Vagina (tissue), 2 donors: ENCODE measurements at regions of chr14 and their contacts with region 1.

Region 1: DNA sequence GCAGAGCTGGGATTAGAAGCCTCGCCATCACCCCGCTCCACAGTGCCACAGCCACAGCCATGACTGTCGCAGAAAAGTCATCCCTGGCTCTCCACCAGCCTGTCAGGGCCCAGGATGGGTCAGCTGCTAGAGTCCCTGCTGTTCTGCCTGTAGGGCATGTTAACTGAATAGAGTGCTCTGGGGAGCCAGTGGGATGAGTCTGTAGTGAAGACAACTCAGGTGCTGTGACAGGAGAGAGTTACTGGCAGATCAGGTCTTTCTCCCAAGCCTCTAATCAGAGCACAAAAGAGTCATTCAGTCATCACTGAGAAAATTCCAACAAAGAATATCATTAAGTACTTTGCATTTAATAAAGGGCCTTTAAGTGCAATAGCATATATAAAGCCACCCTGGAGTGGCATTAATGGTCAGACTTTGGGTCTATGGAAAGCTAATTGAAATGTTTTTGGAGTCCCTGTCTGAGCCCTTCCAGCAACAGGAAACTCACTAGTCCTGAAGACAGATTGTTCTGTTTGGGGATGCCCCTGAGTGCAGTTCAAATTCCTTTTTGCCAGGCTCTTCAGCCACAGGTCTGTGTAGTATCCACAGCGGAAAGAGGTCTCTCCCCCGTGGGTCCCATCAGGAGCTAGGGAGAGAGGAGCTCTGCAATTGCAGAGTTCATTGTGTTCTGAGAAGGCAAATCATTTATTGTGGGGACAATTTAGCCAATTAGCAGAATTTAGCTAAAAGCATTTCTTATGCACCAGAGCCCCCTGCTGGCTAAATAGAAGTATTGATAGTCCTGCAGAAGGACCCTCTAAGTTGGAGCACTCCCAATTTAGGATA is 45.2 kb upstream of the C14orf132 start:
- DNase-seq: no peak
- H3K4me3 ChIP-seq: no peak overlapping the region
- H3K27ac ChIP-seq: no peak overlapping the region
- H3K4me1 ChIP-seq: no peaks in the 10 kb centered on the region
- H3K27me3 ChIP-seq: no peaks in the 10 kb centered on the region
- CTCF ChIP-seq: peak; percentile 34 to 76 (median 51)
- POLR2A ChIP-seq: no peak

Region 2: DNA sequence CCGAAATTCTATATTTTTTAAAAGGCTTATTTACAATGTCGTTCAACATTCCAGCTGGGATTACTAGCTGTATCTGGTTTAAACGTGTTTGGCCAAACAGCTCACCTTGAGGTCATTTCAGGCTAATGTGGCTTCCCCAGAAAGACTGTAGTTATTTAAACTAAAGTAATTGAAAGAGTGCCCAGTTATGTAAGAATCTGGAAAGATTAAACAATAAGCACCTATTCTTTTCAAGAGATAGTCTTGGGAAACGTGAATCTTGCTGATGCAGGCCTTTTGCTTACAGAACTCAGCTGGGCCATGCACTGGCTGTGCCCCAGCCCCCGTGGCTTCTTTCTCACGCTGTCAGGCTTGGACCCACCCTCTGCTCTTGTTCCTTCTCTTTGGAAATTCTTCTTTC is 434.8 kb before region 1 on chr14:
- intact Hi-C with region 1: loop called (anchors 5 kb)
- DNase-seq: no peak
- H3K4me3 ChIP-seq: no peak overlapping the region
- H3K27ac ChIP-seq: no peak overlapping the region
- H3K4me1 ChIP-seq: peaks cover 3% of the 10 kb centered on the region
- H3K27me3 ChIP-seq: no peaks in the 10 kb centered on the region
- CTCF ChIP-seq: no peak
- POLR2A ChIP-seq: no peak

Region 3: DNA sequence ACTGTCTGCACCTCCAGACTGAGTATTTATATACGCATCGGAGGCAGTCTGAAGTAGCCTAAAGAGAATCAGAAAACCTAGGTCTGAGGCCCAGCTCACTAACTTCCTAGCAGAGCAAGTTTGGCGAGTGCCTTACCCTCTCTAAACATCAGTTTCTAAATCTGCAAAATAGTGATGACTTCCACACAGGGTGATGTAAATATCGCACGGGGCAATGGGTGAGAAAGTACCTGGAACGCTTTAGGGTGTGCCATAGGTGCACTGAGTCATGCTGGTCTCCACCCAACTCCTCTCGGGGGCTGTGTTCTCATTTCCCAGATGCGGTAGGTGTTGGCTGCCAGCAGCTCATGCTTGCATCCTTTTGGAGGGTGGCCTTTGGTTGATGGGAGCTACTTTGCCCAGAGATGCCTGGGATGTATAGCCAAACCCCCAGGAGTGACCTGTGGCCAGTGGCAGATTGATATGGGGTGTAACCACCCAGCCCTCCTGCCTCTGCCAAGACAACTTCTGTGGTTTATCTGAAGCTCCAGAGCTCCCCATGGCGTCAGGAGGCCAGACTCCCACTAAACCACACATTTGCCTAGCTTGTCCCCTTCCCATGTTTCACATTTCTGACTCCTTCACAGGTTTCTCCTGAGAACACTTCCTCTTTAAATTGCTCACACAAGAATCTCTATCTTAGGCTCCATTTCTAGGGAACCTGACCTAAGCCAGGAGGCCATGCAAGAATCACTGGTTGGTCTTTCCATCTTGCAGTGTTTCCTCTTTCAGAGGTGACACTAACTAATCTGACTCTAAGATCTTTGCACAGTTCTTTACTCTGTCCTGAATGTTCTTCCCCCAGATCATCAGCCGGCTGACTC is 179.4 kb before region 1 on chr14:
- intact Hi-C with region 1: no loop called
- DNase-seq: peak; percentile 64 to 87
- H3K4me3 ChIP-seq: no peak overlapping the region
- H3K27ac ChIP-seq: no peak overlapping the region
- H3K4me1 ChIP-seq: no peaks in the 10 kb centered on the region
- H3K27me3 ChIP-seq: no peaks in the 10 kb centered on the region
- CTCF ChIP-seq: no peak
- POLR2A ChIP-seq: no peak